Activated CD4-positive, alpha-beta memory T cell treated with anti-CD3 and anti-CD28 coated beads for 36 hours (primary cell): ENCODE measurements at regions of chr19 and their contacts with region 1.

Region 1: DNA sequence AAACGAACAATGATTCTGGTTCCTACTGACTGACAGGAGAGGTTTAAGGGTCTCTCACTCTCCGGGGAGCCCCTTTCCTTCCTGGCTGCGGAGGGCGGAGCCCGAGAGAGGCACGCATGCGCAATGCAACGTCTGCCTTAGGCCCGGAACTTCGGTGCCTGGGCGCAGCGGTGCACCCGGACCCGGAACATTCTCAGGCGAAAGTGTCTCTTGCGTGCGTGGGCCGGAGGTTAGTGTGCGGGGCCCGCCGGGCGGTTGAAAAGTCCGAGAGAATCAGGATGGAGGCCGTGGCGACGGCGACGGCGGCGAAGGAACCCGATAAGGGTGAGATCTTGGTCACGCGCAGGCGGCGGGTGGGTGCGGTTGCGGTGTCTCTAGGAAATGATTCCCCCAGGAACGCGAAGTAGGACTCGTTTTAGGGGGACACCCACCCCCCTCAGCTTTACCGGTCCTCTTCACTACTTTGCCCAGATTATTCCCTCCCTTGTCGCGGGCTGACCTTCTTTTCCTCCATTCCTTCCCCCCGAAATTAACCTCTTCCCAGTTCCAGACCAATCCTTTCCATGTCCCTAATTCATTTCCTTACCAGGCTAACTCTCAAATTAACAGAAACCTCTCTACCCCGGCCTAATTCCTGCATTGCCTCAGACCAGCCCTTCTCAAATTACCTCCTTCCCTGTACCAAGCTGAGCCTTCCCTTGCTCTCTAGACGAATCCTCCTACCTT is at the start of gene CCDC97:
- DNase-seq: peak; percentile 92
- H3K4me3 Mint-ChIP-seq: peak within 1 kb of the TSS; percentile 96
- H3K27ac Mint-ChIP-seq: peak within 1 kb of the TSS; percentile 96
- H3K4me1 Mint-ChIP-seq: peaks cover 65% of the 10 kb centered on the region
- H3K27me3 Mint-ChIP-seq: no peaks in the 10 kb centered on the region
- total RNA-seq, gene CCDC97: 20.5 to 23.4 TPM

Region 2: DNA sequence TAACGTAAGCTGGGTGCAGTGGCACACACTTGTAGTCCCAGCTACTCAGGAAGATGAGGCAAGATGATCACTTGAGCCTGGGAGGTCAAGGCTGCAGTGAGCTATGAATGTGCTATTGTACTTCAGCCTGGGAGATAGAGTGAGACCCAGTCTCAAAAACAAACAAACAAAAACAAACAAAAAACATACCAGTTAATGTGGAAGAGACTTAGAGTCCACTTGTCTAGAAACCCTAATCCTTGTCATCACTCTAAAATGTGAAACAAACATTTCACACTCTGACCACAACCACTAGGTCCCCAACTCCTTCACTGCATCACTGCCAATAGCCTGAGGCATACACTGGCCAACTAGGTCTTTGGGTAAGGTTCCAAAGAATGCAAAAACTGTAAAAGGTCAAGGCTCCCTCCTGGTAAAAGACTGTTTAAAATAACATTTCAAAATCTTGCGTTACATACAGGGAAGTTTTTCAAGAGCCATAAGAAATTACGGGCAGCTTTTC is 347.7 kb before region 1 on chr19:
- CTCF ChIA-PET with region 1: no interaction called
- POLR2A ChIA-PET with region 1: no interaction called
- intact Hi-C with region 1: no loop called
- DNase-seq: no peak
- H3K4me3 Mint-ChIP-seq: no peak overlapping the region
- H3K27ac Mint-ChIP-seq: no peak overlapping the region
- H3K4me1 Mint-ChIP-seq: no peaks in the 10 kb centered on the region
- H3K27me3 Mint-ChIP-seq: peaks cover 17% of the 10 kb centered on the region

Region 3: DNA sequence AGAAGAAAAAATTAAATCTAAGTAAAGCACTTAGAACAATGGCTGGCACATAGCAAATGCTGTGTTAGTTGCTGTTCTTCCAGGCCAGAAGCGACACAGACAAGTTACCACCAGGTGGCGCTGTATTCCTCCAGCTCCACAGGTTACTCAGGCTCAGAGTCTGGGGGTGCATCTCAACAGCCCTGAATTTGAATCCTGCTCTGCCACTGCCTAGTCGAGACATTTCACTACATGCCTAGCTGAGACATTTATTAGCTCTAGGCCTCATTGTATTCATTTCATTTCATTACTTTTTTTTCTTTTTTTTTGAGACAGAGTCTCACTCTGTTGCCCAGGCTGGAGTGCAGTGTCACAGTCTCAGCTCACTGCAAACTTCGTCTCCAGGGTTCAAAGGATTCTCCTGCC is 335.6 kb before region 1 on chr19:
- CTCF ChIA-PET with region 1: no interaction called
- POLR2A ChIA-PET with region 1: no interaction called
- intact Hi-C with region 1: loop called (anchors 5 kb)
- DNase-seq: peak; percentile 83
- H3K4me3 Mint-ChIP-seq: no peak overlapping the region
- H3K27ac Mint-ChIP-seq: no peak overlapping the region
- H3K4me1 Mint-ChIP-seq: peaks cover 26% of the 10 kb centered on the region
- H3K27me3 Mint-ChIP-seq: peaks cover 6% of the 10 kb centered on the region

Region 4: DNA sequence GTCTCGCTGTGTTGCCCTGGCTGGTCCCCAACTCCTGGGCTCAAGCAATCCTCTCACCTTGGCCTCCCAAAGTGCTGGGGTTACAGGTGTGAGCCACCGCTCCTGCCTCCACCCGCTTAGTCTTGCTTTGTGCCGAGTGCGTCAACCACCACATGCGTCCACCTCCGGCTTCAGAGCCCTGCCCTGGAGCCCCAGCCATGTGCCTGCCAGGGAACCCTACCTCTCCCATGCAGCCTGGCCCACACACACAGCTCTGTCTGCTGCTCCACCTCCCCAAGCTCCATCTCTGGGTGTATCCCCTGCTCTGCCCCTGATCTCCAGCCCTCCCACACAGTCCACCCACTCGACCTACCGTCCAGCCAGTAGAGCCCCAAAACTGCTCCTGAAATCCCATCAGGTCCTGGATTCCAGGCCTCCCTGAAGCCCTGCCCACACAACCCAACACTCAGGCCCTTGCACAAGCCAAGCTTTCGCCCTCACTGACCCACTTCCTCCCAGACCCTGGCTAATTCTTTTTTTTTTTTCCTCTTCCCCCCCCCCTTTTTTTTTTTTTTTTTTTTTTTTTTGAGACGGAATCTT is 186.4 kb before region 1 on chr19:
- CTCF ChIA-PET with region 1: interaction called, 3 read pairs
- POLR2A ChIA-PET with region 1: no interaction called
- intact Hi-C with region 1: loop called (anchors 2 kb)
- DNase-seq: no peak
- H3K4me3 Mint-ChIP-seq: no peak overlapping the region
- H3K27ac Mint-ChIP-seq: no peak overlapping the region
- H3K4me1 Mint-ChIP-seq: peaks cover 23% of the 10 kb centered on the region
- H3K27me3 Mint-ChIP-seq: no peaks in the 10 kb centered on the region

Region 5: DNA sequence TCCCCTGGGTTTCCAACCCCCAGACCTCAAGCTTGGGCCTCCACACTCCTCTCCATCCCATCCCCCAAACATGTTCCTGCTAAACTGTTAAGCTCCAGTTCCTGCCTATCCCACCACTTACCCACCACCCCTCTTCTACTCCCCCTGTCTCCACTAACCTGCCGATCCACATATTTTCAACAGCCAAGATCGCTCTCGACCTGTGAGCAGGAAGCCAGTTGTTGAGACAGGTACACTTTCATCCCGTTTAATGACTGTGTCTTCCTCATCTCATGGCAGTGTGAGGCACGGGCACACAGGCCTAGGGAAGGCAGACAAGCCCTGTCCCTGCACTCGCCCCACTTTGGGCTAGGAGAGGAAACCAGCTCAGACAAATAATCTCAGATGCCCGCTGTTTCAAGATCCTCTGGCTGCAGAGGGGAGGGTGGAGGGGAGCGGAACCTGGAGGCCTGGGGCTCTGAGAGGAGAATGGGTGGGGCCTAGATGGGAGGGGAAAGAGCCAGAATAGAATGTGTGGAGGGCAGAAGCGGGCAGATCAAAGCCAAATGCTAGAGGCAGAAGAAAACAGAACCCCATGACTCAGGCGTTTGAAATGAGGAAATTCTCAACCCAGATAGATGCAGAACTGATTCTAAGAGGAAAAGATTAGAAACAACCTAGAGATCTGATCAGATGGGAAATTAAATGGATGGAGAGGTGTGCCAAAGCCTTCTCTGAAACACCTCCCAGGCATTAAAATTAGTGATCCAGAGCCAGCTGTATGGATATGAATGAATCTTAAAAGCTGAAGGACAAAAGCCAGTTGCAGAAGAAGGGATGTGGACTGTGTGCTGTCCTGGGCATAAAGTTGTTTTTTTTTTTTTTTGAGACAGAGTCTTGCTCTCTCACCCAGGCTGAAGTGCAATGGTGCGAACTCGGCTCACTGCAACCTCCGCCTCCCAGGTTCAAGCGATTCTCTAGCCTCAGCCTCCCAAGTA is 134.1 kb before region 1 on chr19:
- CTCF ChIA-PET with region 1: no interaction called
- POLR2A ChIA-PET with region 1: no interaction called
- intact Hi-C with region 1: no loop called
- DNase-seq: peak; percentile 53
- H3K4me3 Mint-ChIP-seq: no peak overlapping the region
- H3K27ac Mint-ChIP-seq: peak overlapping the region; percentile 2
- H3K4me1 Mint-ChIP-seq: peaks cover 11% of the 10 kb centered on the region
- H3K27me3 Mint-ChIP-seq: no peaks in the 10 kb centered on the region

Region 6: DNA sequence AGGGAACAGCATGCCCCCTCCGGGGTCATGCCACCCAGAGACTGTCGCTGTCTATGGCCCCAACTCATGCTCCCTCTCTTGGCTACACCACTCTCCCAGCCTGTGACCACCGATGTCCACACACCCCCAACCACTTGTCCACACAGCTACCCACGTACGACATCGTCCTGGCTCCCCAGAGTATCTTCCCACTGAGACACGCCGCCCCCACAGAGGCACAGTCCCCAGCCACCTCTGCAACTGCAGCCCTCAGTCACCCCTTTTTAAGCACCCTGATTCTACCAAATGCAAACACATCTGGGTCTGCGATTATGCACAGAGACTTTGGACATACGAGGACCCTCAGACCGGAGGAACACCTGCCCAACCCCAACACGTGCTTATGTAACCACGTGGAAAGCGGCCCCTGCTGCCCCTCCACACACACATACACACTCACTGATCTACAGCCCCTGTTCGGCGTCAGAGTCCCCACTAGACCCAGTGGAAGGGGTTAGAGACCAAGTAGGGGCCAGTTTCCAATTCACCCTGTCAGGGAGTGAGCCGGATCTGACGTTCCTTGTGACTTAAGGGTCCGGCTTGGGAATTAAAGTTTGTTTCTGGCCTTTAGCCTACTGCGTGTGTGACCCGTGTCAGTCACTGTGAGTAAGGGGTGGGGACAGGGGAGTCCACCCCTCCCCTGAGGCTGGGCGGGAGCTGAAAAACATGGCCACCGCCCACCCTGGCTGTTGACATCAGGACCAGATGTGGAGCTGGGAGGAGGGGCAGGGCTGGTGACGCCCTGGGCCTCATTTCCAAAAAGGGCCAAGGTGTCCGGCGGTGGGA is 103.1 kb before region 1 on chr19:
- CTCF ChIA-PET with region 1: interaction called, 86 read pairs
- POLR2A ChIA-PET with region 1: no interaction called
- intact Hi-C with region 1: loop called (anchors 1 kb)
- DNase-seq: no peak
- H3K4me3 Mint-ChIP-seq: no peak overlapping the region
- H3K27ac Mint-ChIP-seq: no peak overlapping the region
- H3K4me1 Mint-ChIP-seq: peaks cover 11% of the 10 kb centered on the region
- H3K27me3 Mint-ChIP-seq: peaks cover 2% of the 10 kb centered on the region

Region 7: GRCh38 chr19:41298348-41298964 is 11.7 kb before region 1 on chr19:
- CTCF ChIA-PET with region 1: interaction called, 12 read pairs
- POLR2A ChIA-PET with region 1: interaction called, 11 read pairs
- intact Hi-C with region 1: loop called (anchors 1 kb)
- DNase-seq: peak; percentile 48
- H3K4me3 Mint-ChIP-seq: no peak overlapping the region
- H3K27ac Mint-ChIP-seq: peak overlapping the region; percentile 85
- H3K4me1 Mint-ChIP-seq: peaks cover 94% of the 10 kb centered on the region
- H3K27me3 Mint-ChIP-seq: no peaks in the 10 kb centered on the region

Region 8: DNA sequence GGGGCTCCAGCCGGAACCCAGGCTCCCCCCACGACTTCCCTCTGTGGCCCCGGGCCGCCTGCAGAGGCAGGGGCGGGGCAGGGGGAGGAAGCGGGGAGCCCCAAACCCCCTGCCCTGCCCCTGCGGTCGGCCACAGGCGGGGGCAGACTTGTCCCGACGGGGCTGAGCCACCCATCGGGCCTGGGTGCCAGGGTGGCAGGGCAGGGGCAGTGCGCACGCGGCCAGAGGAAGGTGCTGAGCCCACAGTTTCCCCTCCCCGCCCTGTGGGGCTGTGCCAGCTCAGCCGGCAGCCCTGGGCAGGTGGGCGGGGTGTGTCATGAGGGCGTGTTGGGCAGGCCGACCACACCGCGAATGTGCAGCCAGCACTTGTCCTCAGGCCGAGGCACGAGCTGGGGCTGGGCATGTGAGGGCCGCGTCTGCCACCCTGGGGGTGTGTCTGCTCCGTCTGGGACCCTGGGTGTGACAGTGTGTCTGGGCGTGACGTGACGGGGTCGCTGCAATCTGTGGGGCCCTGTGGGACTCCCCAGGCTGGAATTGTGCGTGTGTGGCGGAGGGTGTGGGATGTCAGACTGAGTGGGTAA is 17.5 kb after region 1 on chr19:
- CTCF ChIA-PET with region 1: interaction called, 7 read pairs
- POLR2A ChIA-PET with region 1: interaction called, 6 read pairs
- intact Hi-C with region 1: loop called (anchors 1 kb)
- DNase-seq: peak; percentile 93
- H3K4me3 Mint-ChIP-seq: peak overlapping the region; percentile 80
- H3K27ac Mint-ChIP-seq: peak overlapping the region; percentile 96
- H3K4me1 Mint-ChIP-seq: peaks cover 56% of the 10 kb centered on the region
- H3K27me3 Mint-ChIP-seq: no peaks in the 10 kb centered on the region

Region 9: GRCh38 chr19:41548954-41549688 is 238.9 kb after region 1 on chr19:
- CTCF ChIA-PET with region 1: no interaction called
- POLR2A ChIA-PET with region 1: no interaction called
- intact Hi-C with region 1: loop called (anchors 5 kb)
- DNase-seq: peak; percentile 88
- H3K4me3 Mint-ChIP-seq: peak overlapping the region; percentile 98
- H3K27ac Mint-ChIP-seq: peak overlapping the region; percentile 96
- H3K4me1 Mint-ChIP-seq: peaks cover 61% of the 10 kb centered on the region
- H3K27me3 Mint-ChIP-seq: no peaks in the 10 kb centered on the region